B cell (primary cell): ENCODE measurements at regions of chr10 and their contacts with region 1.

Region 1: GRCh38 chr10:14742815-14743214 is 31.9 kb downstream of the FAM107B start:
- DNase-seq: peak; percentile 78
- ATAC-seq: peak; percentile 83
- H3K4me3 ChIP-seq: peak overlapping the region in 1 of 5 experiments; percentile 14
- H3K4me3 Mint-ChIP-seq: peak overlapping the region; percentile 74
- H3K27ac ChIP-seq: peak overlapping the region; percentile 93 to 98
- H3K27ac Mint-ChIP-seq: peak overlapping the region; percentile 88
- H3K4me1 ChIP-seq: peaks cover 71 to 76% of the 10 kb centered on the region in 2 donors
- H3K4me1 Mint-ChIP-seq: peaks cover 83% of the 10 kb centered on the region
- H3K27me3 ChIP-seq: no peaks in the 10 kb centered on the region
- H3K27me3 Mint-ChIP-seq: no peaks in the 10 kb centered on the region
- CTCF ChIP-seq: no peak

Region 2: GRCh38 chr10:14659626-14660196 is 83.1 kb before region 1 on chr10:
- CTCF ChIA-PET with region 1: interaction called, 3 read pairs
- POLR2A ChIA-PET with region 1: no interaction called
- intact Hi-C with region 1: loop called (anchors 1 kb)
- DNase-seq: peak; percentile 81
- ATAC-seq: peak; percentile 75
- H3K4me3 ChIP-seq: peak overlapping the region in 3 of 5 experiments; percentile 2 to 45 (median 3)
- H3K4me3 Mint-ChIP-seq: peak overlapping the region; percentile 66
- H3K27ac ChIP-seq: peak overlapping the region; percentile 72 to 88
- H3K27ac Mint-ChIP-seq: peak overlapping the region; percentile 94
- H3K4me1 ChIP-seq: peaks cover 63 to 71% of the 10 kb centered on the region in 2 donors
- H3K4me1 Mint-ChIP-seq: peaks cover 87% of the 10 kb centered on the region
- H3K27me3 ChIP-seq: no peaks in the 10 kb centered on the region
- H3K27me3 Mint-ChIP-seq: no peaks in the 10 kb centered on the region
- CTCF ChIP-seq: no peak

Region 3: GRCh38 chr10:14670551-14671240 is 72.1 kb before region 1 on chr10:
- CTCF ChIA-PET with region 1: no interaction called
- POLR2A ChIA-PET with region 1: no interaction called
- intact Hi-C with region 1: no loop called
- DNase-seq: no peak
- ATAC-seq: no peak
- H3K4me3 ChIP-seq: no peak overlapping the region
- H3K4me3 Mint-ChIP-seq: no peak overlapping the region
- H3K27ac ChIP-seq: no peak overlapping the region
- H3K27ac Mint-ChIP-seq: peak overlapping the region; percentile 55
- H3K4me1 ChIP-seq: peaks cover 16 to 18% of the 10 kb centered on the region in 2 donors
- H3K4me1 Mint-ChIP-seq: peaks cover 27% of the 10 kb centered on the region
- H3K27me3 ChIP-seq: no peaks in the 10 kb centered on the region
- H3K27me3 Mint-ChIP-seq: no peaks in the 10 kb centered on the region
- CTCF ChIP-seq: no peak